ENCODE measurements at regions of chr3 and their contacts with region 1.

Region 1: GRCh38 chr3:77254967-77255831 is 215.3 kb downstream of the ROBO2 start:
- DNase-seq: peak; percentile 68
- H3K4me3 ChIP-seq: no peak overlapping the region
- H3K27ac ChIP-seq: no peak overlapping the region
- H3K4me1 ChIP-seq: peaks cover 30% of the 10 kb centered on the region
- H3K27me3 ChIP-seq: no peaks in the 10 kb centered on the region
- CTCF ChIP-seq: peak; percentile 67

Region 2: DNA sequence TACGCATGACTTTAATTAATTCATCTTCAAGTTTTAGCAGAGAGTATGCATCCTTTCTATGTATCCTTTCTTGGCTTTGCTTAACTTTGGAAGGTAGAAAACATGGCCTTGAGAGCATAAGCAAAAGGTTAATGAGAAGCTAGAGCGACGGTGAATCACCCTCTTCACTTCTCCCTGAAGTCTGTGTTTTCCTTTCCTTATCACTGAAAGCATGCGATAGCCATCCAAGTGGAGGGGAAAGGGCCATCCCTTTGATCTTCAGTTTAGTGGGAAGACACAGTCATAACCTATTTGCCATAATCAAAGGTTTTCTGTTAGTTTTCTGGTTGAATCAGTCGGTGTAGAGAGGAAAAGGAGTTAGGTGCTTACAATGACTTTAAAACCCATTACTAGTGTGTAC is 569.3 kb before region 1 on chr3:
- CTCF ChIA-PET with region 1: no interaction called
- POLR2A ChIA-PET with region 1: no interaction called
- intact Hi-C with region 1: loop called (anchors 10 kb)
- DNase-seq: no peak
- H3K4me3 ChIP-seq: no peak overlapping the region
- H3K27ac ChIP-seq: no peak overlapping the region
- H3K4me1 ChIP-seq: peaks cover 13% of the 10 kb centered on the region
- H3K27me3 ChIP-seq: no peaks in the 10 kb centered on the region
- CTCF ChIP-seq: no peak

Measured in A673 (cell line).